CD4-positive, alpha-beta memory T cell (primary cell): ENCODE measurements at regions of chr19 and their contacts with region 1.

Region 1: DNA sequence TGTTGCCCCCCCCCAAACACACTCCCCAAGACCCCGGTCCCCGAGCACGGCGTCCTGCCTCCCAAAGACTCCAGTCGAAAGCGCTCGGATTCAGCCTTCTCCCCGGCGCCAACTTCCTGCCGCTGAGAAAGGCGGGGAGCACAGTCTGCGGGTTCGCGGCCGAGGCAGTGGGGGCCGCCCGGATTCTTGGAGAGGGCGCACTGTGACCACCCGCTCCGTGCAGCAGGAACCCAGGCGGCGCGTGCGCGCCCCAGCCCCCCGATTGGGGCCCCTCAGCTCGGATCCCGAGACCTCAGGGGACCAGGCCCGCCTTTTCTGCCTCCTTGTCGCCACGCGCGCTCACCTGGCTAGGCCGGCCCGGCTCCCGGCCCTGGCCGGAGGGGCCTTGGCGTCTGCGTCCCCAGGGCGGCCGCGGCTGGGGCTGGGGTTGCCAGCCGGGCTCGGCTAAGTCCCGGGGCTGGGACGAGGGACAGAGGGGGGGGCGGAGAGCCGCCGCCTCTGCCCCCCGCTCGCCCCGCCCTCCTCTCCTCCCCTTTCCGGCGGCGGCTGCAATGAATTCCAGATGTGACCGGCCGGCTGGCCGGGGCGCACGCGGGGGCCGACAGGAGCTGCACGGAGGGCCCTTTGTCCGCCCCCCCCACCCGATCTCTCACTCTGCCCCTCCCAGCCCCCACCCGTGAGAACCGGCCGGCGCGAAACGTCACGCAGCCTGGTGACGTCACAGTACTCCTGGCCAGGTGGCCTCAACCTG is at the start of gene S1PR2:
- DNase-seq: peak; percentile 67 to 86 (median 75)
- H3K4me3 ChIP-seq: peak within 1 kb of the TSS; percentile 69 to 77
- H3K4me3 Mint-ChIP-seq: peak within 1 kb of the TSS; percentile 87 to 92 (median 90)
- H3K27ac ChIP-seq: peak within 1 kb of the TSS; percentile 92
- H3K27ac Mint-ChIP-seq: peak within 1 kb of the TSS; percentile 92 to 97 (median 94)
- H3K4me1 ChIP-seq: peaks cover 37% of the 10 kb centered on the region
- H3K4me1 Mint-ChIP-seq: peaks cover 20 to 52% (median 30%) of the 10 kb centered on the region in 4 donors
- H3K27me3 ChIP-seq: no peaks in the 10 kb centered on the region
- H3K27me3 Mint-ChIP-seq: no peaks in the 10 kb centered on the region
- total RNA-seq, gene S1PR2: 9.0 to 9.4 TPM

Region 2: DNA sequence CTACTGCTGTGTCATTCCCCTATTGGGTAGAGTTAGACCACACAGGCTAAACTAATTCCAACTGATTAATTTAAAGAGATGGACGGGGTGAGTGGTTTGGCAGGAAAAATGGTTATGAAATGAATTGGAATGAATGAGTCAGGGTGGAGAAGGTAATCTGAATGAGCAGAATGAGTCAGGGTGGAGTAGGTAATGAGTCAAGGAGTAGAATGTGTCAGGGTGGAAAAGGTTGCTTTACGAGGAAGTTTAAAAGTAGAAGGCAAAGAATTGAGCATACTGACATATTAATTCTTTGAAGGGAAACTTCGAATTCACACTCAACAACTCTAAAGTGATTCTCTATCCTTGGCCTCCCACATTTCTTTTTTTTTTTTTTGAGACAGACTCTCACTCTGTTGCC is 634.0 kb before region 1 on chr19:
- CTCF ChIA-PET with region 1: no interaction called
- POLR2A ChIA-PET with region 1: no interaction called
- intact Hi-C with region 1: no loop called
- DNase-seq: no peak
- H3K4me3 ChIP-seq: no peak overlapping the region
- H3K4me3 Mint-ChIP-seq: no peak overlapping the region
- H3K27ac ChIP-seq: no peak overlapping the region
- H3K27ac Mint-ChIP-seq: no peak overlapping the region
- H3K4me1 ChIP-seq: no peaks in the 10 kb centered on the region
- H3K4me1 Mint-ChIP-seq: no peaks in the 10 kb centered on the region
- H3K27me3 ChIP-seq: no peaks in the 10 kb centered on the region
- H3K27me3 Mint-ChIP-seq: peaks cover 0 to 13% of the 10 kb centered on the region in 2 donors

Region 3: DNA sequence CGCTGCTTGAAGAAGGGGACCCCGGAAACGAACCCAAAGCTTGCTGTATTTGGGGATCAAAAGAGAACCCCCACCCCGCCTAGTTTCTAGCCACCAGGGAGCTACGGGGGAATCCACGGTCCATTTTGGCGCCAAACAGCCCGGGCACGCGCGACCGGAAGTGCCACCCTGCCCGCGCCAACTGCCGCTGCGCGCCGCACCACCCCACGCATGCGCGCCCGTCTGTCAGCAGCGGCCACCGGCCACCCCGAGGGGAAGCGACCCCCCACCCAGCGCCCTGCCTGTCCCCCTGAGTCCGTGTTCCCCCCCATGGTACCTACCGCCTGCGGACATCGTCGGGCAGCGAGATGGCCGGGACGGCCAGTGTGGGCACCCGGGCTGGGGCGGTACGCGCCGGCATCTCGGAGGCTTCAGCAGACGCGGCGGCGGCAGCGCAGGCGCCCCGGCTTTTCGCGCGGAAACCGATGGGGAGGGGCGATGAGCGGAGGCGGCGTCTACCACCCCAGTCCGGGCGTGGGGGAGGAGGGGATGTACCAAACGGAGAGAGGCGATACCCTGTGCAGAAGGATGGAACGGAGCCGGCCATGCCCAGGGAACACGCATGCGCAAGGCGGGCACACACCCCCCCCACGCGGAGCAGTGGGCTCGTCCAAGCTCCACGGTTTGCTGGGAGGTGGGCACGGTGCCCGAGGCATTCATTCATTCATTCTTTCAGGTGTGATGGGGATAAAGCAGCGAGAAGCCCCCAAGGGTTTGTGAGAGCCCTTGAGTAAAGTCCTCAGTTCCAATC is 36.3 kb before region 1 on chr19 and contains the start of gene DNMT1:
- CTCF ChIA-PET with region 1: interaction called, 3 read pairs
- POLR2A ChIA-PET with region 1: interaction called, 16 read pairs
- intact Hi-C with region 1: loop called (anchors 2 kb)
- DNase-seq: peak; percentile 94 to 98 (median 95)
- H3K4me3 ChIP-seq: peak within 1 kb of the TSS; percentile 61 to 62
- H3K4me3 Mint-ChIP-seq: peak within 1 kb of the TSS; percentile 90 to 97 (median 96)
- H3K27ac ChIP-seq: peak within 1 kb of the TSS; percentile 77
- H3K27ac Mint-ChIP-seq: peak within 1 kb of the TSS; percentile 83 to 97 (median 95)
- H3K4me1 ChIP-seq: peaks cover 41% of the 10 kb centered on the region
- H3K4me1 Mint-ChIP-seq: peaks cover 22 to 52% (median 37%) of the 10 kb centered on the region in 4 donors
- H3K27me3 ChIP-seq: no peaks in the 10 kb centered on the region
- H3K27me3 Mint-ChIP-seq: no peaks in the 10 kb centered on the region
- total RNA-seq, gene DNMT1: 208 to 250 TPM

Region 4: GRCh38 chr19:10245189-10245939 is 14.3 kb after region 1 on chr19:
- CTCF ChIA-PET with region 1: interaction called, 132 read pairs
- POLR2A ChIA-PET with region 1: interaction called, 67 read pairs
- intact Hi-C with region 1: loop called (anchors 1 kb)
- DNase-seq: no peak
- H3K4me3 ChIP-seq: no peak overlapping the region
- H3K4me3 Mint-ChIP-seq: no peak overlapping the region
- H3K27ac ChIP-seq: no peak overlapping the region
- H3K27ac Mint-ChIP-seq: peak overlapping the region in 5 of 7 donors; percentile 10 to 83 (median 62)
- H3K4me1 ChIP-seq: peaks cover 3% of the 10 kb centered on the region
- H3K4me1 Mint-ChIP-seq: peaks cover 3 to 5% (median 4%) of the 10 kb centered on the region in 4 donors
- H3K27me3 ChIP-seq: no peaks in the 10 kb centered on the region
- H3K27me3 Mint-ChIP-seq: no peaks in the 10 kb centered on the region

Region 5: DNA sequence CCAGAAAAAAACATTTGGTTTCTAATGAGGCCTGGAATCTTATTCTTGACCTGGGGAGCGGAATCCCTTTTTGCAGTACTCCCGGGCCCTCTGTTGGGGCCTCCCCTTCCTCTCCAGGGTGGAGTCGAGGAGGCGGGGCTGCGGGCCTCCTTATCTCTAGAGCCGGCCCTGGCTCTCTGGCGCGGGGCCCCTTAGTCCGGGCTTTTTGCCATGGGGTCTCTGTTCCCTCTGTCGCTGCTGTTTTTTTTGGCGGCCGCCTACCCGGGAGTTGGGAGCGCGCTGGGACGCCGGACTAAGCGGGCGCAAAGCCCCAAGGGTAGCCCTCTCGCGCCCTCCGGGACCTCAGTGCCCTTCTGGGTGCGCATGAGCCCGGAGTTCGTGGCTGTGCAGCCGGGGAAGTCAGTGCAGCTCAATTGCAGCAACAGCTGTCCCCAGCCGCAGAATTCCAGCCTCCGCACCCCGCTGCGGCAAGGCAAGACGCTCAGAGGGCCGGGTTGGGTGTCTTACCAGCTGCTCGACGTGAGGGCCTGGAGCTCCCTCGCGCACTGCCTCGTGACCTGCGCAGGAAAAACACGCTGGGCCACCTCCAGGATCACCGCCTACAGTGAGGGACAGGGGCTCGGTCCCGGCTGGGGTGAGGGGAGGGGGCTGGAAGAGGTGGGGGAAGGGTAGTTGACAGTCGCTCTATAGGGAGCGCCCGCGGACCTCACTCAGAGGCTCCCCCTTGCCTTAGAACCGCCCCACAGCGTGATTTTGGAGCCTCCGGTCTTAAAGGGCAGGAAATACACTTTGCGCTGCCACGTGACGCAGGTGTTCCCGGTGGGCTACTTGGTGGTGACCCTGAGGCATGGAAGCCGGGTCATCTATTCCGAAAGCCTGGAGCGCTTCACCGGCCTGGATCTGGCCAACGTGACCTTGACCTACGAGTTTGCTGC is 56.0 kb after region 1 on chr19 and contains the start of gene ICAM4:
- CTCF ChIA-PET with region 1: no interaction called
- POLR2A ChIA-PET with region 1: no interaction called
- intact Hi-C with region 1: no loop called
- DNase-seq: peak in 2 of 5 donors; percentile 19 to 25
- H3K4me3 ChIP-seq: peak within 1 kb of the TSS in 1 of 2 donors; percentile 19
- H3K4me3 Mint-ChIP-seq: peak within 1 kb of the TSS; percentile 43 to 82 (median 68)
- H3K27ac ChIP-seq: no peak within 1 kb of the TSS
- H3K27ac Mint-ChIP-seq: peak within 1 kb of the TSS in 5 of 7 donors; percentile 36 to 89 (median 60)
- H3K4me1 ChIP-seq: peaks cover 65% of the 10 kb centered on the region
- H3K4me1 Mint-ChIP-seq: peaks cover 29 to 68% (median 46%) of the 10 kb centered on the region in 4 donors
- H3K27me3 ChIP-seq: peaks cover 43% of the 10 kb centered on the region
- H3K27me3 Mint-ChIP-seq: peaks cover 24 to 29% of the 10 kb centered on the region in 2 donors
- total RNA-seq, gene ICAM4: 0.70 to 1.3 TPM

Region 6: GRCh38 chr19:10835754-10836477 is 604.9 kb after region 1 on chr19 and contains the start of gene TMED1:
- CTCF ChIA-PET with region 1: no interaction called
- POLR2A ChIA-PET with region 1: no interaction called
- intact Hi-C with region 1: loop called (anchors 10 kb)
- DNase-seq: peak; percentile 94 to 95 (median 94)
- H3K4me3 ChIP-seq: peak within 1 kb of the TSS; percentile 64 to 89
- H3K4me3 Mint-ChIP-seq: peak within 1 kb of the TSS; percentile 96 to 100 (median 98)
- H3K27ac ChIP-seq: peak within 1 kb of the TSS; percentile 95
- H3K27ac Mint-ChIP-seq: peak within 1 kb of the TSS; percentile 99 to 100 (median 100)
- H3K4me1 ChIP-seq: peaks cover 17% of the 10 kb centered on the region
- H3K4me1 Mint-ChIP-seq: peaks cover 9 to 21% (median 13%) of the 10 kb centered on the region in 4 donors
- H3K27me3 ChIP-seq: no peaks in the 10 kb centered on the region
- H3K27me3 Mint-ChIP-seq: no peaks in the 10 kb centered on the region
- total RNA-seq, gene TMED1: 9.0 to 10.9 TPM